WTC11 (cell line): ENCODE measurements at regions of chr2 and their contacts with region 1.

Region 1: DNA sequence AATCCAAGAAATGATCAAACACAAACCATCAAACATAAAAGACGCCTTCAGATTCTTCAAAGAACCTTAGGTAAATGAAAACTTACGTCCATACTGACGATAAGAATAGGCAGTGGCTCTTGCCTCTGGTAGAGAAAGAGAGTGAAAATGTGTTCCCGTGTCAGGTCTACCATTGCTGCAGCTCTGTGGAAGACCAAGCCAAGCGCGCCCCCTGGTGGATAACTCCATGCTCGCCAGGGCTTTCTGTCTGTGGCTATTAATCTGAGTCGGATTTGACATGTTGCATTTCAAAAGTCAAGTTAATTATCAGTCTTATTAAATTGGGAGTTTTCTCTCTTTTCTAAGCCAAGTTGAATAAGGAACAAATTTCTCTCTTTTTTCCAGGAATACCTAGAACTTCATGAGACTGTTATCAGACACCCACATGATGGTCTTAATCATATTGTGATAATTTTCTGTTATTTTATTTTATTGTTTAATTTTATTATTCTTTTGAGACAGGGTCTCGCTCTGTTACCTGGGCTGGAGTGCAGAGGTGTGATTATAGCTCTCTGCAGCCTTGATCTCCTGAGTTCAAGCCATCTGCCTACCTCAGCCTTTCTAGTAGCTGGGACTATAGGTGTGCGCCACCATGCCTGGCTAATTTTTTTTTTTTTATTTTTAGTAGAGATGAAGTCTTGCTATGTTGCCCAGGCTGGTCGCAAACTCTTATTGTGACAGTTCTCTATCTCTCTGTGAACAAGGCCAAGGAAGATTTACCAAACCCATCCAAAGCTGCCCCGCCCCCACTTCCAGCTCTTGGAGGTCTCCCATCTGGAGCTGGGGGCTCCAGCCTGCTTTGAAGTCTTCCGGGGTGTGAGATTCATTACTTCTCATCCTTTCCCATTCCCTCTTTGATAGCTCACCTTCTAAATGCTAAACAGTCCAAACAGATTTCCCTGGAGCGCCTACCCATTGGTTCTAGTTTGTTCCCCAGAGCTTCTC is 15.8 kb upstream of the ZAP70 start:
- DNase-seq: peak; percentile 92
- ATAC-seq: peak; percentile 73
- H3K4me3 Mint-ChIP-seq: no peak overlapping the region
- H3K27ac Mint-ChIP-seq: no peak overlapping the region
- H3K4me1 Mint-ChIP-seq: peaks cover 20% of the 10 kb centered on the region
- H3K27me3 Mint-ChIP-seq: peaks cover 6% of the 10 kb centered on the region; the same call in 1 of the 2 replicates
- CTCF ChIP-seq: peak; percentile 92

Region 2: GRCh38 chr2:97645695-97646629 is 51.6 kb before region 1 on chr2 and contains the start of gene COX5B:
- CTCF ChIA-PET with region 1: interaction called, 12 read pairs
- POLR2A ChIA-PET with region 1: interaction called, 11 read pairs
- DNase-seq: peak; percentile 99
- ATAC-seq: peak; percentile 98
- H3K4me3 Mint-ChIP-seq: peak within 1 kb of the TSS; percentile 98
- H3K27ac Mint-ChIP-seq: peak within 1 kb of the TSS; percentile 99
- H3K4me1 Mint-ChIP-seq: peaks cover 5% of the 10 kb centered on the region
- H3K27me3 Mint-ChIP-seq: no peaks in the 10 kb centered on the region
- CTCF ChIP-seq: no peak
- total RNA-seq, gene COX5B: 317 to 346 TPM (median 331 TPM) in 3 replicates

Region 3: DNA sequence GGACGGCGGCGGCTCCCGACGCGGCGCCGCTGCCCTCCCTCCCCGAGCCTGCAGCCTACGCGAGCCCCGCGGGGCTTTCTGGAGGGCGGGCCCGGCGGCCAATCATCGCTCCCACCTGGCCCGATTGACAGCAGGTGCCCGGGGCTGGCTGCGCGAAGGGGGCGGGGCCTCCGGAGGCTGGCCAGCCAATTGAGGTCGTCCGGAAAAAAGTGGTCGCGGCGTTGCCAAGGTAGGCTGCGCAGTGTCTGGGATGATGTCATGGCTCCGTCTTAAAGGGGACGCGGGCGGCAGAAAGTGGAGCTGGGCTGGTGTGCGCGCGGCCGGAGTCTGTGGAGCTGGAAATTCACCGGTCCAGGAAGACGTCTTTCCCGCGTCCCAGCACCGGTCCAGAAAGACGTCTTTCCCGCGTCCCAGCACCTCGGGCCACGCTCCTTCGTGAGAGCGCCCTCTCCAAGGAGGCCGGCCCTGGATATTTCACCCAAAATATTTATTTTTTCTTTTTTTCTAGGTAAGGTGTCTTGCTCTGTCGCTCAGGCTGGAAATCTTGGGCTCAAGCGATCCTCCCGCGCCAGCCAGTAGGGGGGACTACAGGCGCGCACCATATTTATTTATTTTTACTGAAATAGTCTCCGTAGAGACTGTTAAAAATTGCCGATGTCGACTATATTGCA is 33.4 kb before region 1 on chr2 and contains the start of gene ACTR1B:
- CTCF ChIA-PET with region 1: interaction called, 99 read pairs
- POLR2A ChIA-PET with region 1: interaction called, 4 read pairs
- DNase-seq: peak; percentile 98
- ATAC-seq: peak; percentile 91
- H3K4me3 Mint-ChIP-seq: peak within 1 kb of the TSS; percentile 93
- H3K27ac Mint-ChIP-seq: peak within 1 kb of the TSS; percentile 97
- H3K4me1 Mint-ChIP-seq: peaks cover 26% of the 10 kb centered on the region
- H3K27me3 Mint-ChIP-seq: no peaks in the 10 kb centered on the region
- CTCF ChIP-seq: 0 out of 2 replicates have a peak, but pooled peaks have one; percentile 20
- total RNA-seq, gene ACTR1B: 58.2 to 71.8 TPM (median 70.4 TPM) in 3 replicates

Region 4: DNA sequence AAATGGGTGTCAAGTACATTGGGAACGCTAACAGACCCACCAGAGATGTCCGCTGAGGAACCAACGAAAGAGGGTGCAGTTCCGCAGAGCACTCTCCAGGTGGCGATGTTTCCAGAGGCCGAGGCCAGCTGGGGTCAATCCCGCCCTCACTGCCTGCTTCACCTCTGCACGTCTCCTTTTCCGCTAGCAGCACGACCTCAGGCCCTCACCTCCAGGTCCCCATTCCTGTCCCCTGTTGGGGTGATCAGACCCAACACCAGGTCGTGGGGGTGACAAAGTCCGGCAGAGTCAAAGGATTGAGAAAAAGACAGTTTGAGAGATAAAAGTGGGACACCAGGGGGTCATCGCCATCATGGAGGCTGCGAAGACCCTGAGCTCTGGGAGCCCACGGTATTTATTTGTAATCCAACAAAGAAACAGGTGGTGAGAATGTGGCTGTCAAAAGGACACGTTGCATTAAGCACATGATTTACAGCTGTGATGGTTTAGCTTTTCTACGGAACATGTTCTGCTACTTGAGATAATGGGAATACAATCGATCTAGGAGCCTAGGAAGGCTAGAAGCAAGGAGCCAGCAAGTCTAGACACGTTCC is 43.1 kb after region 1 on chr2:
- CTCF ChIA-PET with region 1: interaction called, 56 read pairs
- POLR2A ChIA-PET with region 1: no interaction called
- DNase-seq: peak; percentile 74
- ATAC-seq: peak; percentile 84
- H3K4me3 Mint-ChIP-seq: no peak overlapping the region
- H3K27ac Mint-ChIP-seq: no peak overlapping the region
- H3K4me1 Mint-ChIP-seq: peaks cover 15% of the 10 kb centered on the region
- H3K27me3 Mint-ChIP-seq: no peaks in the 10 kb centered on the region
- CTCF ChIP-seq: peak; percentile 86

Region 5: GRCh38 chr2:97763176-97763845 is 65.8 kb after region 1 on chr2:
- CTCF ChIA-PET with region 1: interaction called, 11 read pairs
- POLR2A ChIA-PET with region 1: no interaction called
- DNase-seq: no peak
- ATAC-seq: no peak
- H3K4me3 Mint-ChIP-seq: no peak overlapping the region
- H3K27ac Mint-ChIP-seq: no peak overlapping the region
- H3K4me1 Mint-ChIP-seq: peaks cover 21% of the 10 kb centered on the region
- H3K27me3 Mint-ChIP-seq: peaks cover 8% of the 10 kb centered on the region
- CTCF ChIP-seq: no peak

Region 6: DNA sequence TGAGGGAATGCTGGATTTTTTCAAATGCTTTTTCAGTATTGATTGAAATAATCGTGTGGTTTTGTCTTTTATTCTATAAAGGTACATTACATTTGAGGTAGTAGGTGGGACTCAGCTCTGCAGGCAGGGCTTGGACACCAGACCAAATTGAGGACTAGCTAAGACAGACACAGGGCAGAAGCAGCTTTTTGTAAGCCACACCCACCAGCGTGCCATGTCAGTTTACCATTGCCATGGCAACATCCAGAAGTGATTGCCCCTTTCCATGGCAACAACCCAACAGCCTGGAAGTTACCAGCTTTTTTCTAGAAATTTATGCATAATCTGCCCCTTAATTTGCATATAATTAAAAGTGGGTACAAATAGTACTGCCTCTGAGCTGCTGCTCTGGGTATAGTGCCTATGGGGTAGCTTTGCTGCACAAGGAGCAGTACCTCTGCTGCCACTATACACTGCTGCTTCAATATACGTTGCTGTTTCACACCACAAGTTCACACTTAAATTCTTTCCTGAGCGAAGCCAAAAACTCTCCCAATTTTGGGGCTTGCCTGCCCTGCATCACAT is 365.8 kb after region 1 on chr2:
- CTCF ChIA-PET with region 1: no interaction called
- POLR2A ChIA-PET with region 1: no interaction called
- DNase-seq: peak; percentile 42
- ATAC-seq: peak; percentile 44; the same call in 1 of the 2 replicates
- H3K4me3 Mint-ChIP-seq: no peak overlapping the region
- H3K27ac Mint-ChIP-seq: no peak overlapping the region
- H3K4me1 Mint-ChIP-seq: no peaks in the 10 kb centered on the region
- H3K27me3 Mint-ChIP-seq: no peaks in the 10 kb centered on the region; the same call in 1 of the 2 replicates
- CTCF ChIP-seq: no peak